ENCODE measurements at regions of chr6 and their contacts with region 1.

Region 1: DNA sequence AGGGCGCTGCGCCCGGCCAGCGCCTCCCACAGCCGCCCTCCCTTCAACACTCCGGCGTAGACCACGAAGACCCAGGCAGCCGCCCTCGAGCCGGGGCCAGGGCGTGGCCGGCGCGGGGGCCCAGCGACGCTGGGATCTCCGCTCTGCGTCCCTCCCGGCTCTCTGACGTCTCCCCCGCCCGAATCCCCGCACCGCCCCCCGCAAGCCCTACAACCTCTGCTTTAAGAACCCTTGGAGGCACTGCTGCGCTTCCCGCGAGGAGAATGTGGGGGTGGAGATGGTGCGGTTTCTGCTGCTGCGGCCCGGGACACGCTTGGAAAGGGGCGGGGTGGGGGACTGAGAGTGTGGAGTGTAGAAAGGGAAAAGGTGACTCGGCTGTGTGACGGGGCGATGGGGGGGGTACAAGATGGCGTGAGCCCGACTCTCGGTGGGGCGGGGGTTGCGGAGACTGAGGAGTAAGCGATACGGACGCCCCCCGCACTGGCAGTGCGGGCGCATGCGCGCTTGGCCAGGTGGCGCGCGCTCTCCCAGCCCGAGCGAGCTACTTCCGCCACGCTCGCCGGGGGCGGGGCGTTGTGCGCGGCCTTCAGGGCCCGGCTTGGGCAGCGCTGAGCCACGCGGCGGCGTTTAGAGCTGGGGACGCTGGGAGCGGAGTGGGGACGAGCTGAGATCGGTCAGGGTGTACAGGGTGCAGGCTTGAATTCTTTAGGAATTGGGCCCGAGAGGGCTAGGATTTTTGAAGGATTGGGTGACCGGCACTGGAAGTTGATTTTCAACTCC is at the start of gene SUPT3H:
- DNase-seq: peak; percentile 95
- ATAC-seq: peak; percentile 94
- H3K4me3 ChIP-seq: peak within 1 kb of the TSS; percentile 79 to 81 (median 80)
- H3K27ac ChIP-seq: peak within 1 kb of the TSS; percentile 96
- H3K4me1 ChIP-seq: peaks cover 32% of the 10 kb centered on the region
- H3K27me3 ChIP-seq: no peaks in the 10 kb centered on the region; a peak in 1 of 5 replicates
- CTCF ChIP-seq: peak; percentile 64
- EP300 ChIP-seq: peak; percentile 9 to 14; a peak in 1 of 4 replicates
- POLR2A ChIP-seq: peak; percentile 97 to 99
- RAD21 ChIP-seq: peak; percentile 82
- total RNA-seq, gene SUPT3H: 11.9 and 13.1 TPM in 2 replicates

Region 2: DNA sequence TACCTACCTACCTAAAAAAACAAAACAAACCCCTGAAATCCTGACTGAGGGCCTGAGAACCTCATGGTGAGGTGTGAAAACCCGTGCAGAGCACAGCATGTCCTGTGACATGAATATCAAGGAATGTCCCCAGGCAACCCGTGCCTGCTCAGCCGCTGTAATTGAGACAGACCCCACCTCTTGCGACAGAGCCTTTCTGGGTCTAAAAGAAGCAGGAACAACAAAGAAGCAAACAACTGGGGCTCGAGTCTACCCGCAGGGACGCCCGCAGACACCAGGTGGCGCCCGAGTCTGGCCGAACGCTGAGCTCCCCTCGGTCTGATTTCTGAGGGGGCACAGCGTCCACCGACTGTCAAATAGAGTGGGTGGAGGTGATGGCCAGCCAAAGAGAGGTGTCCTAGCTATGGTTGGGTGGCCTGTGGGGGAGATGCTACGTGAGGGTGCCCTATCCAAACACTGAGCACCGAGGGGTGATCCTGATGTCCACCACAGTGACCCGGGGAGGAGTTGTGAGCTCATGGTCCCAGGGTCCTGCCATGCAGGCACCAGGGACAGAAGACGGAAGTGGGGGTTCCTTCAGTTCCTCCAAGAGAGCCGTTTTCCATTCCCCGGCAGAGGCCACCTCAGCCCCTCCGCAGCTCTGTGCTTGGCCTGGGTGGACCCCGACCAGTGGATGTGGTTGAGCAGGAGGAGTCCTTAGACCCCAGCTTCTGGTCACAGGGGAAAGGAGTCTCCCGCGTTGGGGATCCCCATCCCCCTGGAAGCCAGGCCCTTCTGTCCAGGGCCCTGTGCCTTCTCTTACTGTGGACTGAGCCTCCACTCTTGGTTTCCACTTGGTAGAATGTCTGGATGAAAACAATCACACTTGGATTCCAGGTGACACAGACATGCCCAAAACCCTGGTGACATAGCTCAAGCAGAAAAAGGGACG is 722.1 kb before region 1 on chr6:
- CTCF ChIA-PET with region 1: no interaction called
- POLR2A ChIA-PET with region 1: interaction called, 9 read pairs
- in situ Hi-C with region 1: no loop called
- intact Hi-C with region 1: loop called (anchors 5 kb)
- DNase-seq: peak; percentile 63
- ATAC-seq: peak; percentile 90
- H3K4me3 ChIP-seq: no peak overlapping the region
- H3K27ac ChIP-seq: no peak overlapping the region
- H3K4me1 ChIP-seq: peaks cover 14% of the 10 kb centered on the region
- H3K27me3 ChIP-seq: peaks cover 0 to 24% of the 10 kb centered on the region in 2 experiments; a peak in 3 of 5 replicates
- CTCF ChIP-seq: peak; percentile 98
- EP300 ChIP-seq: no peak
- POLR2A ChIP-seq: no peak
- RAD21 ChIP-seq: peak; percentile 95

Region 3: GRCh38 chr6:44869321-44869897 is 508.3 kb before region 1 on chr6:
- CTCF ChIA-PET with region 1: no interaction called
- POLR2A ChIA-PET with region 1: no interaction called
- in situ Hi-C with region 1: no loop called
- intact Hi-C with region 1: loop called (anchors 10 kb)
- DNase-seq: peak; percentile 5
- ATAC-seq: peak; percentile 41; the same call in 2 of the 3 replicates
- H3K4me3 ChIP-seq: no peak overlapping the region
- H3K27ac ChIP-seq: no peak overlapping the region
- H3K4me1 ChIP-seq: peaks cover 17% of the 10 kb centered on the region
- H3K27me3 ChIP-seq: no peaks in the 10 kb centered on the region
- CTCF ChIP-seq: no peak
- EP300 ChIP-seq: no peak; a peak in 1 of 4 replicates
- POLR2A ChIP-seq: no peak
- RAD21 ChIP-seq: no peak

Region 4: DNA sequence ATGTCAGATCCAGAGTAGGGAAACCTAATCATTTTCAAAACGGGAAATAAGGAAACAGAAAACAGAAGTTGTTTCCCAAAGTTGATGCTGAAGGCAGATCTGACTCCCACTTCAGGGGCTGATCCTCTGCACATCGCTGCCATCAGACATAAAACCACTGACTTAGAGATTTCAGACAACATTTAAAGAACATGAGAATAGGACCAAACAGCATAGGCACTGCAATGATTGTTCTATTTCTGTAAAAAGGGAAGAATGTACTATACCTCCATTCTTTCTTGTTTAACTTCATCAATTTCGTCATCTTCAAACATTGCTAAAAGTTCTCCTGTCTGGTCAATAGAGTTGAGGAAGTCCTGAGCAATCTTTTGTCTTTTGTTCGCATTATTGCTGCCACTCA is 374.4 kb before region 1 on chr6:
- CTCF ChIA-PET with region 1: no interaction called
- POLR2A ChIA-PET with region 1: no interaction called
- in situ Hi-C with region 1: no loop called
- intact Hi-C with region 1: no loop called
- DNase-seq: peak; percentile 28
- ATAC-seq: no peak
- H3K4me3 ChIP-seq: no peak overlapping the region
- H3K27ac ChIP-seq: no peak overlapping the region
- H3K4me1 ChIP-seq: no peaks in the 10 kb centered on the region
- H3K27me3 ChIP-seq: no peaks in the 10 kb centered on the region
- CTCF ChIP-seq: no peak
- EP300 ChIP-seq: peak in 1 of 2 experiments; percentile 30; a peak in 1 of 4 replicates
- POLR2A ChIP-seq: no peak
- RAD21 ChIP-seq: no peak

Region 5: DNA sequence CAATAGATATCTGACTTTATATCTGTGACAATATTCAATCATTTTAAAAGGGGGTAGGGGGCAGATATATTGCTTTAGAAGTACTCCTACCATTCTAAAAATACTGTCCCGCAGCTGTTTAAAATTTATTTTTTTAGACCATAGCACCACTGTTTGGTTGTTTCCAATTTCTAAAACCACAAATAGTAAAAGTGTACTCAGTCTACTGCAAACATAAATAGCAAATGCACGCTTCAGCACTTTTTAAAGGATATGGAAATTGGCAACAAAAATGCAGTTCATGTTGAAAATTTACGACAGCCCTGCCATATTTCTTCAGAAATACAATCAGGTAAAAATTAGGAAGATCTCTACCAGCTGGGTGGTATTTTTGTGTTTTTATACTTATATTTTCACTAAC is 181.6 kb before region 1 on chr6:
- CTCF ChIA-PET with region 1: no interaction called
- POLR2A ChIA-PET with region 1: interaction called, 10 read pairs
- in situ Hi-C with region 1: no loop called
- intact Hi-C with region 1: loop called (anchors 5 kb)
- DNase-seq: no peak
- ATAC-seq: no peak
- H3K4me3 ChIP-seq: no peak overlapping the region
- H3K27ac ChIP-seq: no peak overlapping the region
- H3K4me1 ChIP-seq: peaks cover 47% of the 10 kb centered on the region
- H3K27me3 ChIP-seq: no peaks in the 10 kb centered on the region
- CTCF ChIP-seq: no peak
- EP300 ChIP-seq: no peak
- POLR2A ChIP-seq: no peak
- RAD21 ChIP-seq: no peak

Region 6: GRCh38 chr6:45366534-45366933 is 11.2 kb before region 1 on chr6:
- CTCF ChIA-PET with region 1: no interaction called
- POLR2A ChIA-PET with region 1: interaction called, 12 read pairs
- in situ Hi-C with region 1: no loop called
- intact Hi-C with region 1: no loop called
- DNase-seq: no peak
- ATAC-seq: no peak
- H3K4me3 ChIP-seq: no peak overlapping the region
- H3K27ac ChIP-seq: no peak overlapping the region
- H3K4me1 ChIP-seq: peaks cover 16% of the 10 kb centered on the region
- H3K27me3 ChIP-seq: no peaks in the 10 kb centered on the region
- CTCF ChIP-seq: no peak
- EP300 ChIP-seq: no peak
- POLR2A ChIP-seq: no peak
- RAD21 ChIP-seq: no peak

Region 7: DNA sequence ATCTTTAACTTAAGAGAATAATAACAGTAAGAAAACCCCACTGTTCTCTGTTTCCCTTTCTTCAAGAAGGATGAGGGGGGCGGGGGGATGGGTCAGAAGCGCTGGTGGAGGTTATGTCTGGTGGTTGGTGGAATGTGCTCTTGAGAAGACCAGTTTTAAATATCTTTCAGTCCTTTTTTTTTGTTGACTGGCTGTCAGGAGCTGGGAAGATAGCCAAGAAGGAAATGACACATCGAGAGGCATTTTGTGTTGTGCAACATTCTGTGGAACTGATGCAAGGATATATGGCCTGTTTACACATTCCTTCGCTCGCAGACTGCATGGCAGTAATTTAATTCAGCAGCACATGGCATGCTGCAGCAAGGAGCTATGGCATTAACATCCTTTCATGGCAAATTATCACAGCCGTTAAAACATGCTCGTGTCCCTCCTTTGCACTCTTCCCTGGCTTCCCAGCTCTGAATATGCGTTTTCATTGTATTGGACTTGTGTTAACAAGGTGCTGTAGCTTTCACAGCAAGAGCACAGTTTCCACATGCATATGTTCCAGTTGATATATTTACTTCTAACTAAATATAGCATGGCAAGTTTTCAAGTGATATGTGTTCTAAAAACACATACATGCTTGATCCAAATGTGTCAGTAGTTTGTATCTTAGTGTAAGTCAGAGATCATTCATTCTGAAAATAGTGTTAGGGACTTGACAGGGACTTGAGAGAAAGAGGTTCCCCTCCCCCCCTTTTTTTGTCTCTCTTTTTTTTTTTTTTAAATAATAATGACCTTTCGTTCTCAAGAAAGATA is 68.2 kb after region 1 on chr6:
- CTCF ChIA-PET with region 1: no interaction called
- POLR2A ChIA-PET with region 1: interaction called, 10 read pairs
- in situ Hi-C with region 1: no loop called
- intact Hi-C with region 1: no loop called
- DNase-seq: peak; percentile 98
- ATAC-seq: peak; percentile 97
- H3K4me3 ChIP-seq: peak overlapping the region in 1 of 3 experiments; percentile 38; a peak in 1 of 6 replicates
- H3K27ac ChIP-seq: no peak overlapping the region
- H3K4me1 ChIP-seq: peaks cover 17% of the 10 kb centered on the region
- H3K27me3 ChIP-seq: peaks cover 0 to 25% of the 10 kb centered on the region in 2 experiments; a peak in 3 of 5 replicates
- CTCF ChIP-seq: no peak
- EP300 ChIP-seq: peak; percentile 95 to 99
- POLR2A ChIP-seq: no peak
- RAD21 ChIP-seq: no peak

Measured in HepG2 (cell line).